ENCODE measurements at regions of chrX and their contacts with region 1.

Region 1: DNA sequence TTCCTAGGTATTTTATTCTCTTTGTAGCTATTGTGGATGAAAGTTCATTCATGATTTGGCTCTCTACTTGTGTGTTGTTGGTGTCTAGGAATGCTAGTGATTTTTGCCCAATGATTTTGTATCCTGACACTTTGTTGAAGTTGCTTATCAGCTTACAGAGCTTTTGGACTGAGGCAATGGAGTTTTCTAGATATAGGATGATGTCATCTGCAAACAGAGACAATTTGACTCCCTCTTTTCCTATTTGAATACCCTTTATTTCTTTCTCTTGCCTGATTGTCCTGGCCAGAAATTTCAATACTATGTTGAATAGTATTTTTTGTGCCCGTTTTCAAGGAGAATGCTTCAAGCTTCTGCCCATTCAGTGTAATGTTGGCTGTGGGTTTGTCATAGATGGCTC is 442.9 kb downstream of the ZNF674 start:
- DNase-seq: no peak
- H3K4me3 ChIP-seq: no peak overlapping the region
- H3K27ac ChIP-seq: no peak overlapping the region
- H3K4me1 ChIP-seq: no peaks in the 10 kb centered on the region
- H3K27me3 ChIP-seq: no peaks in the 10 kb centered on the region
- CTCF ChIP-seq: no peak

Region 2: GRCh38 chrX:46168254-46168653 is 65.9 kb after region 1 on chrX:
- CTCF ChIA-PET with region 1: no interaction called
- dilution Hi-C with region 1: no loop called
- in situ Hi-C with region 1: no loop called
- intact Hi-C with region 1: loop called (anchors 2 kb)
- DNase-seq: no peak
- H3K4me3 ChIP-seq: no peak overlapping the region
- H3K27ac ChIP-seq: no peak overlapping the region
- H3K4me1 ChIP-seq: peaks cover 26% of the 10 kb centered on the region
- H3K27me3 ChIP-seq: no peaks in the 10 kb centered on the region
- CTCF ChIP-seq: no peak

Region 3: DNA sequence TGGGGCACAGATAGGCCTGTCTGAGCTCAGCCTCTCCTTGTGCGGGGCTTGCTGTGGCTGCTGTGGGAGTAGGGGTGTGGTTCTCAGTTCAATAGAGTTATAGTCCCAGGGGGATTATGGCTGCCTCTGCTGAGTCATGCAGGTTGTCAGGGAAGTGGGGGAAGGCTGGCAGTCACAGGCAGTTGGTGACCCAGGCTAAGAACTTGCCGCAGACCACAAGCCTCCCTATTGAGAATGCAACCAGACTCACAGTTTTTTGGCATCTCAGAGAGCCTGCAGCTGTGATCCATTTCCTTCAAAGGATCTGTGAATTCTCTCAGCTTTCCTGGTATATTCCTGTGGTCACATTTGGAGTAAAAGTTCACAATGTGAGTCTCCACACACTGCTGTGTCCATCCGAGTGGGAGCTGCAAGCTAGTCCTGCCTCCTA is 77.9 kb after region 1 on chrX:
- CTCF ChIA-PET with region 1: no interaction called
- dilution Hi-C with region 1: no loop called
- in situ Hi-C with region 1: no loop called
- intact Hi-C with region 1: no loop called
- DNase-seq: peak; percentile 82
- H3K4me3 ChIP-seq: no peak overlapping the region
- H3K27ac ChIP-seq: peak overlapping the region; percentile 58
- H3K4me1 ChIP-seq: peaks cover 36% of the 10 kb centered on the region
- H3K27me3 ChIP-seq: no peaks in the 10 kb centered on the region
- CTCF ChIP-seq: no peak